Mammary epithelial cell (primary cell): ENCODE measurements at regions of chr3 and their contacts with region 1.

Region 1: GRCh38 chr3:33131331-33132018 is 17.7 kb downstream of the CRTAP start:
- DNase-seq: peak; percentile 52
- H3K4me3 ChIP-seq: no peak overlapping the region
- H3K27ac ChIP-seq: no peak overlapping the region
- H3K4me1 ChIP-seq: no peaks in the 10 kb centered on the region
- H3K27me3 ChIP-seq: no peaks in the 10 kb centered on the region
- CTCF ChIP-seq: peak; percentile 52 to 71

Region 2: DNA sequence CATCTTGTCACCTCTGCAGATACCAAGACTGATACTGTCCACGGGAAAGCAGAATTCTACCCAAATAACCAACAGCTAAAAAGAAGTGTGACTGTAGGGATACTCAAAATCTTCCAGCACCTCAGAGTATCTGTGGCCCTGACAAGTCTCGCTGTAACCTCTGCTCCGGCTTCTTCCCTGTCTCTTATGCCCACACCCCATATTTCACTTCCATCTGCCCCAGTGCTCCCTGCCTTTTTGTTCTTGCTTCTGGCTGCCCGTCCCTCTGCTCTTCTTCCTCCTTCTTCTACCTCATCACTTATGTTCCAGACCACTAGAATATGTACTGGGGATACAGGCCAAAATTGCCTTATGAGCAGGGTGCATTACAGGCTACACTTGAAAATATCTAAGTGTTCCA is 27.8 kb after region 1 on chr3:
- CTCF ChIA-PET with region 1: no interaction called
- dilution Hi-C with region 1: no loop called
- in situ Hi-C with region 1: no loop called
- intact Hi-C with region 1: no loop called
- DNase-seq: no peak
- H3K4me3 ChIP-seq: no peak overlapping the region
- H3K27ac ChIP-seq: no peak overlapping the region
- H3K4me1 ChIP-seq: no peaks in the 10 kb centered on the region
- H3K27me3 ChIP-seq: no peaks in the 10 kb centered on the region
- CTCF ChIP-seq: no peak

Region 3: GRCh38 chr3:33236005-33236404 is 104.5 kb after region 1 on chr3:
- CTCF ChIA-PET with region 1: interaction called, 11 read pairs
- dilution Hi-C with region 1: no loop called
- in situ Hi-C with region 1: no loop called
- intact Hi-C with region 1: no loop called
- DNase-seq: no peak
- H3K4me3 ChIP-seq: no peak overlapping the region
- H3K27ac ChIP-seq: no peak overlapping the region
- H3K4me1 ChIP-seq: no peaks in the 10 kb centered on the region
- H3K27me3 ChIP-seq: peaks cover 4% of the 10 kb centered on the region
- CTCF ChIP-seq: no peak

Region 4: DNA sequence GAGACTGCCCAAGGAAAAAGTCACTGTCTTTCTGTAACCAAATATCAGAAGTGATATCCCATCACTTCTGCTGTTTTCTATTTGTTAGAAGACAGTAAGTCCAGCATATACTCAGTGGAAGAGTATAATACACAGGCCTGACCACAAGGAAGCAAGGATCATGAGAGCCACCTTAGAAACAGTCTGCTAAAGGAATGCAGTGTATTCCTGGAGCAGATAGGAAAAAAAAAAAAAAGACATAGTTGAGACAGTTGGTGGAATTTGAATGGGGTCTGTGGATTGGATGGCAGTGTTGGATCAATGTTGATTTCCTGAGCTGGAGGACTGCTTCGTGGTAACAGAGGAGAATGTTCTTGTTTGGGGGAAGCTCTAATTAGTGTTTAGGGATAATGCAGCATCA is 119.2 kb after region 1 on chr3:
- CTCF ChIA-PET with region 1: no interaction called
- dilution Hi-C with region 1: no loop called
- in situ Hi-C with region 1: no loop called
- intact Hi-C with region 1: loop called (anchors 1 kb)
- DNase-seq: no peak
- H3K4me3 ChIP-seq: no peak overlapping the region
- H3K27ac ChIP-seq: no peak overlapping the region
- H3K4me1 ChIP-seq: no peaks in the 10 kb centered on the region
- H3K27me3 ChIP-seq: no peaks in the 10 kb centered on the region
- CTCF ChIP-seq: no peak

Region 5: GRCh38 chr3:33318709-33319380 is 187.4 kb after region 1 on chr3:
- CTCF ChIA-PET with region 1: no interaction called
- dilution Hi-C with region 1: no loop called
- in situ Hi-C with region 1: no loop called
- intact Hi-C with region 1: loop called (anchors 5 kb)
- DNase-seq: no peak
- H3K4me3 ChIP-seq: no peak overlapping the region
- H3K27ac ChIP-seq: no peak overlapping the region
- H3K4me1 ChIP-seq: peaks cover 18% of the 10 kb centered on the region
- H3K27me3 ChIP-seq: no peaks in the 10 kb centered on the region
- CTCF ChIP-seq: peak in 1 of 2 donors; percentile 18

Region 6: DNA sequence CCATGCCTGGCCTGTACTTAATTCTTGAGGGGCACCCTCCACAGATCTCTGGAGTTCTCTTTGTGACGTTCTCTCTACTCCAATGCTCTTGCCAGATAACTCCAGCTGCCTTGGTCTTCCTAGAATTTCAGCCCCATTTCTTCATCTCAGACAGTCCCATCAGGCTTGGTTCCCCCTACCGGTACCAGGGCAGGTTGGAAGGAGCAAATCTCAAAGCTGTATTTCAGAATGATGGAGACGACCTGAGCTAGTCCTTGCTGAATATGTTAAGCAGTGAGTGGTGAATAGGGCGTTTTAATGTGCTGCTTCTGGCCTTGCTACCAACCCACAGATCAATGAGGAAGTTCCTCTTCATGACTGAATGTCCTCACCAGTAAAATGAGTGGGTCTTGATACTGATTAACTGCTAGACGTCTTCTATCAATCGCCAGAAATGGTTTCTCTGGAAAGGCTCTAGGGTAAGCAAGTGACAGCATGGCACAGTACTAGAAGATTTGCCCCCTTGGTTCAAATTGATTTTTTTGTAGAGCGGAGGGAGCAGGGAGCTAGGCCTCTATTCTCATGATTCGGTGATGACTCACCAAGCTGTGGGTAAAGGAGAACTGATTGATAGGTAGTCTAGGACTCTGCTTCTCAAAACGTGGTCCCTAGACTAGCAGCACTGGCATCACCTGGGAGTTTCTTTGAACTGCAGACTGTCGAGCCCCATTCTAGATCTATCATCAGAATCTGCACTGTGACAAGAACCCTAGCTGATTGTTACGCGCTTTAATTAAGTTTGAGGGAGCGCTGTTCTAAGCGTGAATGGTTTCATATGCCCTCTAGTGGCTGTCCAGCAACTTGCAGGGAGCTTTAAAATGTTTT is 241.0 kb after region 1 on chr3:
- CTCF ChIA-PET with region 1: interaction called, 40 read pairs
- dilution Hi-C with region 1: no loop called
- in situ Hi-C with region 1: loop called (anchors 5 kb)
- intact Hi-C with region 1: loop called (anchors 1 kb)
- DNase-seq: peak; percentile 78
- H3K4me3 ChIP-seq: no peak overlapping the region
- H3K27ac ChIP-seq: peak overlapping the region; percentile 13
- H3K4me1 ChIP-seq: peaks cover 10% of the 10 kb centered on the region
- H3K27me3 ChIP-seq: no peaks in the 10 kb centered on the region
- CTCF ChIP-seq: peak; percentile 84 to 97

Region 7: DNA sequence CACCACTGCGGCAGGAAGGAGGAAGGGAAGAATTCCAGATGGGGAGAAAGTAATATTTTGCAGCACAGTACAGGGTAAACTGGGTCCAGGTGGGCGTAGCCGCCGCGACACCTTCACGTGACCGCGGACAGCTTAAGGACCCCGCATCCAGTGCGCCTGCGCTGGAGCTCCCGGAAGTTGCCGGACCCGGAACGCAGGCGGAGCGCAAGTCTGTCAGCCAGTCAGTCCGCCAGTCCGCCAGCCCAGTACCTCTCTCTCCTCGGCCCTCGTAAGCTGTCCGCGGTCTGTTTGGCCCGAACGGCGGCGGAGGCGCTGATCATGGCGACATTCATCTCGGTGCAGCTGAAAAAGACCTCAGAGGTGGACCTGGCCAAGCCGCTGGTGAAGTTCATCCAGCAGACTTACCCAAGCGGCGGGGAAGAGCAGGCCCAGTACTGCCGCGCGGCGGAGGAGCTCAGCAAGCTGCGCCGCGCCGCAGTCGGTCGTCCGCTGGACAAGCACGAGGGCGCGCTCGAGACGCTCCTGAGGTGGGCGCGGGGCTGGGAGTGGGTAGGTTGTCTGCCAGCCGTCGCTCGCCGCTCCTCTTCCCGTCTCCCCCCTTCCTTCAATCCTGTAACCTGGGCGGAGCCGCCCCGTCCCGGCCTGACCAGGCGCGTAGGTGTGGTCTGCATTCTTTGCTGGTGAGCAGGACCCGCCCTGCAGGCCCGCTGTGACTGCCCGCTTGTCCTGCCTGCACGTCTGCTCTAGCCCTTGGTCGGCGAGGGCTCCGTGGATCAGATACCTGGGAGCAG is 667.1 kb after region 1 on chr3 and contains the start of gene PDCD6IP:
- CTCF ChIA-PET with region 1: no interaction called
- dilution Hi-C with region 1: loop called (anchors 25 kb)
- in situ Hi-C with region 1: no loop called
- intact Hi-C with region 1: no loop called
- DNase-seq: peak; percentile 96
- H3K4me3 ChIP-seq: peak within 1 kb of the TSS; percentile 67 to 95 (median 95)
- H3K27ac ChIP-seq: peak within 1 kb of the TSS; percentile 96
- H3K4me1 ChIP-seq: peaks cover 26% of the 10 kb centered on the region
- H3K27me3 ChIP-seq: no peaks in the 10 kb centered on the region
- CTCF ChIP-seq: peak in 1 of 2 donors; percentile 19
- total RNA-seq, gene PDCD6IP: 264 to 276 TPM